A549 (cell line): ENCODE measurements at regions of chr1 and their contacts with region 1.

Region 1: DNA sequence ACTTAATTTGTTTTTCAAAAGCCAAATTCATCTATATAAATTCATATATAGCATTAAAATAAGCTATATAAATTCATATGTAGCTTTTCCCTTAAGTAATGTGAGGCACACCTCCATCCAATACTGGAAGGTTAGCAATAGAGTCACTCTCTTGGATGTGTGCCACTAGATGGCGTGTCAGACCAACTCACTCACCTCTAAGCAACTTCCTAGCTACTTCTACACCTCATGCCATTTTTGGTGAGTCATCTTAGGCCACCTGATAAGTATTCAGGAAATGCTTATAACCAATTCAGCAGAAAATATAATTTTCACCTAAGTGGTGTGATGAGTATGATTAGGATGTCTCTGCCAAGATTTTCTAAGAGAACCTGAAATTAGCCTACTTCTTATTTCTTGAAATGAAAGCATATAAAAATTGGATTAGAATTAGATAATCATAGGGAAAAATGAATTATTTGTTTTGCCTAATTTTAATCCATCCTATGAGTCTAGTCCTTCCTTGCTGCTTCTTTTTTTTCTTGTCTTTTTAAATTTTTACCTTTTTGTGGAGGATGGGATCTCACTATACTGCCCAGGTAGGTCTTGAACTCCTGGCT is 34.4 kb upstream of the TADA1 start:
- DNase-seq: peak; percentile 84 to 93
- ATAC-seq: peak; percentile 97 to 100
- H3K4me3 ChIP-seq: no peak overlapping the region
- H3K27ac ChIP-seq: no peak overlapping the region
- H3K4me1 ChIP-seq: no peaks in the 10 kb centered on the region
- CTCF ChIP-seq: peak; percentile 86
- EP300 ChIP-seq: no peak
- POLR2A ChIP-seq: no peak
- RAD21 ChIP-seq: peak; percentile 86 to 90

Region 2: DNA sequence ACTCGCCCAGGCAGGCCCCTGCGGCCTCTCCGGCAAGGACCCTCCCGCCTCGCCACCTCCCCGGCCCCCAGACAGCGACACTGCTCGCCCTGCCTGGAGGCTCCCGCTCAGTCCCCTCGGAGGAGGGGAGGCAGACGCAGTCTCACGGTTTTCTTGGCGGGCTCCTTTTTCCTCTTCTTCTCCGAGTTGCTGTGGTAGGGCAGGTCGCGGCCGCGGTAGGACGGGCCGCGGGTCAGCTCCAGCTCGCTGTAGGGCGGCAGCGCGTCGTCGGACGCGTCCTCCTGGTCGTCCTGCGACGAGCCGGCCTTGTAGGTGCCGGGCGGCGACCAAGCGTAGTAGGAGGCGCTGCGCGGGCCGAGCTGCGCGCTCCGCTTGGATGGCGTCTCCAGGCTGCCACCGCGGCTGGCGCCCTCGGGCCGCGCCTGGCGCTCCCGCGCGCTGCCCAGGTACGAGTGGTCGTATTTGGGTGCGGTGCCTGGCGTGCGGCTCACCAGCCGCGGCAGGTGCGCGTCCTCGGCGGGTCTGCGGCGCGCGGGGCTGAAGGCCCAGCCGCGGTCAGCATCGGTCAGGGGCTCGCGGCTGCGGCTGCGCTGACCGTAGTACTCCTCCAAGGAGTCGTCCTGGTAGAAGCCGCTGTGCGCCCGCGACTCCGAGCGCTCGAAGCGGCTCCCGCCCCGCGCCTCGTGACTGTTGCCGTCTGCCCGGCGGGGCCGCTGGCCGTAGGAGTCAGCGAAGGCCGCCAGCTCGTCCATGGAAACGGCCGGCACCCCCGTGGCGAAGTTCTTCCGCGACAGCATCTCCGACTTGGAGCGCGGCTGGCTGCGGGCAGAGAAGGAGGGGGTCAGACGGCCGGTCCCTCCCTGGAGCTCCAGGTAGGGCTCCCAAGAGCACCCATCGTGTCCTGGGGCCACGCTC is 10.3 kb after region 1 on chr1:
- CTCF ChIA-PET with region 1: interaction called, 23 read pairs
- POLR2A ChIA-PET with region 1: no interaction called
- DNase-seq: peak in 1 of 2 experiments; percentile 15
- ATAC-seq: peak; percentile 57 to 73
- H3K4me3 ChIP-seq: peak overlapping the region; percentile 37
- H3K27ac ChIP-seq: no peak overlapping the region
- H3K4me1 ChIP-seq: no peaks in the 10 kb centered on the region
- CTCF ChIP-seq: no peak
- EP300 ChIP-seq: no peak
- POLR2A ChIP-seq: no peak
- RAD21 ChIP-seq: no peak

Region 3: DNA sequence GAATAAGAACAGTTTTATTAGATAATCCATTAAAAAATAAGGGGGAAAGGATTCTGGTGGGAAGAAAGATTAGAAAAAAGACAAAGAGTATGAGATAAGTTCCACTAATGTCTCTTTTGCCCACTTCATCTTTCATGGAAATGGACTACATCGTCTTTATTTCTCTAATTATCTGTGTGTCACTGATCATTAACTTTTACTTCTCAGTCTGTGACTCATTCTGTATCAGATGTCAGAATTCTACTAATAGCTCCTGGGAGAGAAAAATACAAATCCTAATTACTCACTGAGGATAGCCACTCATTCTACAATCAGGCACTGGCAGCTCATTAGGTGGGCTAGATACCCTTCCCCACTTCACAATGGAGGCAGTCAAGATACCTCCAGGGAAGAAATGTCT is 23.1 kb after region 1 on chr1:
- CTCF ChIA-PET with region 1: interaction called, 23 read pairs
- POLR2A ChIA-PET with region 1: no interaction called
- DNase-seq: no peak
- ATAC-seq: no peak
- H3K4me3 ChIP-seq: no peak overlapping the region
- H3K27ac ChIP-seq: no peak overlapping the region
- H3K4me1 ChIP-seq: no peaks in the 10 kb centered on the region
- CTCF ChIP-seq: no peak
- EP300 ChIP-seq: no peak
- POLR2A ChIP-seq: no peak
- RAD21 ChIP-seq: no peak

Region 4: DNA sequence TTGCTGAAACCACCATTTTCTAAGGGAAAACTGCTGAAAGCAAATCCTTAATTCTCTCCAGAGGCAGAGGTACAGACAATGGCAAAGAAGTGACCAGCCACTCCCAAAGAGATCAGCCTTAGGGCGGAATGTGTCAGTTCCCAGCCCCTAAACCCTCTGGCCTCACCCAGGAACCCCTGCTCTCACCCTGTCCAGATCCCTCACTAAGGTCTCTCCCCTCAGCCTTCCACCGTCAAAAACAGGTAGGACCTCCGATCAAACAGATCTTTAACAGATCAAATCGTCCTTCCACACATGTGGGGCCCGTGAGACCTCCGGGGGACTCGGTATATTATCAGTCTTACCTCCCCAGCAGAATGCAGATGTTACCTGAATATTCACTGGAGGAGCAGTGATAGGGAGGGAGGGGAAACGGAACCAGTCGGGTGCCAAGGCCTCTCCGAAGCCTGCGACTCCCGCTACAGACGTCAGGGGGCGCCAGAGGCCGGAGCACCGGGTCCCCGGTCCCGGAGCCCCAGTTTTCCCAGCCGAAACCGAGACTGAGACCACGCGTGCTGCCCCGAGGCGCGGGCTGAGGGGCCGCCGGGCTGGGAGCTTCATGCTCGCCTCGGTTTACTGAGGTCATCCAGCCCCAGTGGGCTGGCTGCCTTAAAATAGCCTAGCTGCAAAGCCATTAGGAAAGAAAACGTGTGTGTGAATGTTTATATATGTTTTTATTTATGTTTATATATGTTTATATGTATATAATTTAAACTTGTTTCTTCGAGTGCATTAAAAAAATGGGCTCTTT is 156.0 kb after region 1 on chr1:
- CTCF ChIA-PET with region 1: interaction called, 534 read pairs
- POLR2A ChIA-PET with region 1: no interaction called
- DNase-seq: peak; percentile 45 to 86
- ATAC-seq: peak; percentile 89 to 98
- H3K4me3 ChIP-seq: peak overlapping the region; percentile 40
- H3K27ac ChIP-seq: peak overlapping the region; percentile 65 to 82
- H3K4me1 ChIP-seq: no peaks in the 10 kb centered on the region
- CTCF ChIP-seq: peak; percentile 97
- EP300 ChIP-seq: no peak
- POLR2A ChIP-seq: no peak
- RAD21 ChIP-seq: peak; percentile 96 to 99